ENCODE measurements at regions of chr11 and their contacts with region 1.

Region 1: GRCh38 chr11:47176328-47177228 is at the start of gene ARFGAP2:
- DNase-seq: peak; percentile 95
- H3K4me3 Mint-ChIP-seq: peak within 1 kb of the TSS; percentile 93
- H3K27ac Mint-ChIP-seq: peak within 1 kb of the TSS; percentile 99
- H3K4me1 Mint-ChIP-seq: peaks cover 17% of the 10 kb centered on the region
- H3K27me3 Mint-ChIP-seq: no peaks in the 10 kb centered on the region
- CTCF ChIP-seq: no peak
- total RNA-seq, gene ARFGAP2: 78.0 and 81.4 TPM in 2 replicates

Region 2: DNA sequence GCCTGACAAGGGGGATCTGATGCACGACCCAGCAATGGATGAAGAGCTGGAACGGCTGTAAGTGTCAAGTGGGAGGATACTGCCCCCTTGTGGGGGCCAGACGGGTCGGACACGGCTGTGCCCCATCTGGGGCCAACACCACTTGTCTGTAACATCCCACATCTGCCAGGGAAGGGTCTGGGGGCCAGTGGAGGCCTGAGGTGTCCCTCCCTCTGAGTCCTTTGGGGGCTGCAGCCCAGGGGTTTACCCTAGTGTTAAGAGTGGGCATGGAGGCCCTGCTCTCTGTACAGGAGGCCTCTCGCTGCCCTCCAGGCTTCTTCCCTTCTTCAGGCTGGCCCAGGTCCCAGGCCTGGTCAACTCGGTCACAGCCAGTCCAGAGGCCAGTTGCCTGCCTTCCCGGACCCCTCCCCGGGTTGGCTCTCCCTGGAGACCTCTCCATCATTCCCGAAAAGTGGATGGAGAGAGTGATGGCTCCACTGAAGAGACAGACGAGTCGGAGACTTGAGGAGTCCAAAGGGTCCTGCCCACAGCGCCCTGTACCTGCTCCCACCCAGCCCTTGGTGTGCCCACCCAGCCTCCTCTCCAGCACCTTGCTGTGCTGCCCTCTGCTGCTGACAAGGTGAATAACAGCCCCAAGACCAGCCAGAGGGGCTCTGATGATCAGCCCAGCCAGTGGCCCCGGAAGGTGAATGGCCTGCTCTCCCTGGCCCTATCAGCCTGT is 15.3 kb before region 1 on chr11:
- CTCF ChIA-PET with region 1: interaction called, 12 read pairs
- POLR2A ChIA-PET with region 1: interaction called, 8 read pairs
- intact Hi-C with region 1: no loop called
- DNase-seq: peak; percentile 73
- H3K4me3 Mint-ChIP-seq: no peak overlapping the region
- H3K27ac Mint-ChIP-seq: no peak overlapping the region
- H3K4me1 Mint-ChIP-seq: no peaks in the 10 kb centered on the region
- H3K27me3 Mint-ChIP-seq: no peaks in the 10 kb centered on the region
- CTCF ChIP-seq: peak; percentile 60

Region 3: GRCh38 chr11:47191865-47192521 is 15.4 kb after region 1 on chr11:
- CTCF ChIA-PET with region 1: interaction called, 24 read pairs
- POLR2A ChIA-PET with region 1: interaction called, 14 read pairs
- intact Hi-C with region 1: no loop called
- DNase-seq: no peak
- H3K4me3 Mint-ChIP-seq: no peak overlapping the region
- H3K27ac Mint-ChIP-seq: no peak overlapping the region
- H3K4me1 Mint-ChIP-seq: peaks cover 13% of the 10 kb centered on the region
- H3K27me3 Mint-ChIP-seq: no peaks in the 10 kb centered on the region
- CTCF ChIP-seq: no peak

Region 4: GRCh38 chr11:47220401-47220824 is 43.8 kb after region 1 on chr11:
- CTCF ChIA-PET with region 1: interaction called, 55 read pairs
- POLR2A ChIA-PET with region 1: interaction called, 72 read pairs
- intact Hi-C with region 1: loop called (anchors 1 kb)
- DNase-seq: peak; percentile 80
- H3K4me3 Mint-ChIP-seq: peak overlapping the region; percentile 0
- H3K27ac Mint-ChIP-seq: peak overlapping the region; percentile 68
- H3K4me1 Mint-ChIP-seq: peaks cover 22% of the 10 kb centered on the region
- H3K27me3 Mint-ChIP-seq: no peaks in the 10 kb centered on the region
- CTCF ChIP-seq: no peak

Region 5: GRCh38 chr11:47355283-47356128 is 178.9 kb after region 1 on chr11:
- CTCF ChIA-PET with region 1: interaction called, 32 read pairs
- POLR2A ChIA-PET with region 1: no interaction called
- intact Hi-C with region 1: loop called (anchors 1 kb)
- DNase-seq: peak; percentile 94
- H3K4me3 Mint-ChIP-seq: no peak overlapping the region
- H3K27ac Mint-ChIP-seq: no peak overlapping the region
- H3K4me1 Mint-ChIP-seq: peaks cover 5% of the 10 kb centered on the region
- H3K27me3 Mint-ChIP-seq: no peaks in the 10 kb centered on the region
- CTCF ChIP-seq: peak; percentile 99

Region 6: DNA sequence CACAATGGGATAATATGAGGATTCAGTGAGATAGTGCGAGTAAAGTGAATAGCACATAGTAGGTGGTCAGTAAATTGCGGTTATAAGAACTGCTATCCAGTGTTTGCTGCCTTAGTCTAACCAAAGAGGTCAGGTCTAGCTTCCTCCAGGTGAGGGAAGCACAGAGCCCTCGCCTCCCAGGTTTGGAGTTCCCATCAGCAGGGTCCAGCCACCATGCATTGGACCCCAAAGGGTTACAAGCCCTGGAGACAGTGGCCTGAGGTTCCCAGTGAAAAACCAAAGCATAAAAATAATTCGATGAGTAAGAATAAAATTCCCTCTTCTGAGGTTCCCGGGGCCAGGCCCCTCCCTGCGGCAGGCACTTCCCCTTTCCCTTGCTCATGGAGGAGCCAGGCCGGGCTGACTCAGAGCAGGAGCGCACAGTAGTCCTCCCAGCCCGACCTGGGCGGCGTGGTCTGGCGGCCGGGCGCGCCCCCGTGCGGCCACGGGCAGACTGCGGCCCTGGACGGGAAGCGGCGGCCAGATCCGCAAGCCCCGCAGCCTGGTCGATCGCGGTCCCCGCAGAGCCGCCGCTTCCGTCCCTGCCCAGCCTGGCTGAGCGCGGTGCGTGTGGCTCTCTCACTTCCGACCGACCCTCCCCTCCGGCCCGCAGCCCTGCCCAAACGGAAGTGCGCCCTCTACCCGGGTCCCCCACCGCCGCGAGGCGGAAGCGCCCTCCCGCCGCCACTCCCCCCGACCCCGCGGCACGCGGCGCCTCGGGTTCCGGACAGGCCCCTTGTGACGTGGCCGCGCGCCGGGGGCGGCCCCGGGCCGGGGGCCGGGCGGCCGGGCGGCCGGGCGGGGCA is 231.4 kb after region 1 on chr11 and contains the start of gene SLC39A13:
- CTCF ChIA-PET with region 1: interaction called, 3 read pairs
- POLR2A ChIA-PET with region 1: no interaction called
- intact Hi-C with region 1: loop called (anchors 5 kb)
- DNase-seq: peak; percentile 91
- H3K4me3 Mint-ChIP-seq: peak within 1 kb of the TSS; percentile 93
- H3K27ac Mint-ChIP-seq: peak within 1 kb of the TSS; percentile 98
- H3K4me1 Mint-ChIP-seq: peaks cover 24% of the 10 kb centered on the region
- H3K27me3 Mint-ChIP-seq: no peaks in the 10 kb centered on the region
- CTCF ChIP-seq: peak; percentile 79
- total RNA-seq, gene SLC39A13: 56.2 and 56.5 TPM in 2 replicates

Measured in MCF 10A (cell line).